Common myeloid progenitor, CD34-positive (primary cell): ENCODE measurements at regions of chr12 and their contacts with region 1.

Region 1: GRCh38 chr12:106841510-106842302 is 67.2 kb downstream of the RIC8B start:
- DNase-seq: peak; percentile 39 to 63 (median 54)
- H3K4me3 ChIP-seq: no peak overlapping the region
- H3K27ac ChIP-seq: no peak overlapping the region
- H3K4me1 ChIP-seq: peaks cover 8 to 23% (median 14%) of the 10 kb centered on the region in 4 experiments
- H3K27me3 ChIP-seq: no peaks in the 10 kb centered on the region

Region 2: DNA sequence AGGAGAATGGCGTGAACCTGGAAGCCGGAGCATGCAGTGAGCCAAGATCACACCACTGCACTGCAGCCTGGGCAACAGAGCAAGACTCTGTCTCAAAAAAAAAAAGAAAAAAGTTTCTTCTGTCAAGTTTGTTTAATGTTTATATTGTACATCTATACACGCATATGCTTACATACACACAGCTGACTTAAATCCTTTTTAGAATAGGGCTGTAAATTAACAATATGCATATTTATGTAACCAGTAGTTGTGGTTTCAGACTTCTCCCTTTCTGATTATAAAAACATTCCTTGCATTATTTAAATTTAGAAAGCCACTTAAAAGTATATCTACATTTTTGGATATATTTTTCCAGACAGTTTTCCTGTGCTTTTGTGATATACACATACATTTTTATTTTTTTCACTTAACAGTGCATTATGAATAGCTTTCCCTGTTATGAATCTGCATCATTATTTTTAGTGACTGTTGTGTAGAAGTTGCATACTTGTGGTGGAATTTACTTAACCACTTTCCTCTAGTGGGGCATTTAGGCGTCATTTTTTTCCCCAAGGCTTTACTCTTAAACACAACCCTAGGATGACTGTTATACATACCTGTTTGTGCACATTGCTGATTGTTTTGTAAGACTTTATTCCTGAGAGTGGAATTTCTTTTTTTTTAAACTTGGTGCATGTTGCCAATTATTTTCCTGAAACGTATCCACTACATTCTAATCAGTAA is 454.7 kb before region 1 on chr12:
- CTCF ChIA-PET with region 1: interaction called, 20 read pairs
- POLR2A ChIA-PET with region 1: no interaction called
- DNase-seq: no peak
- H3K4me3 ChIP-seq: no peak overlapping the region
- H3K27ac ChIP-seq: no peak overlapping the region
- H3K4me1 ChIP-seq: no peaks in the 10 kb centered on the region
- H3K27me3 ChIP-seq: peaks cover 0 to 18% (median 5%) of the 10 kb centered on the region in 5 experiments

Region 3: DNA sequence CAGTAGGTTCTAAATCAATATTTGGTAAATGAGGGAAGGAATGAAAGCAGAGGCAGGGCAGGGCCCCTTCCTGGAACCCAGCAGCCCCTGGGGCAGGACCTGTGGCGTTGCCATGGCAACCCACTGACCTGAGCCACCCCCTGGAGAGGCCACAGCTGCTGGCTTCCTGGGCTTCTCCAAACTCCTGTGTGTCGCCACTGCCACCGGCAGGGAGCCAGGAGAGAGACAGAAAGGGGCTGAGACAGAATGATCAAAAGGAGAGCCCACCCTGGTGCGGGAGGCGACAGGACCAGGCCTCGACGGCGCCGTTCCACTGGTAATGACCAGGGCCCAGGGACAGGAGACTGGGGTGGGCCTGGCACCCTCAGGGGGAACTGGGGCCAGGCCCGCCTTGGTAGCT is 240.7 kb before region 1 on chr12:
- CTCF ChIA-PET with region 1: no interaction called
- POLR2A ChIA-PET with region 1: no interaction called
- DNase-seq: no peak
- H3K4me3 ChIP-seq: no peak overlapping the region
- H3K27ac ChIP-seq: no peak overlapping the region
- H3K4me1 ChIP-seq: no peaks in the 10 kb centered on the region
- H3K27me3 ChIP-seq: peaks cover 5 to 61% (median 13%) of the 10 kb centered on the region in 5 experiments

Region 4: DNA sequence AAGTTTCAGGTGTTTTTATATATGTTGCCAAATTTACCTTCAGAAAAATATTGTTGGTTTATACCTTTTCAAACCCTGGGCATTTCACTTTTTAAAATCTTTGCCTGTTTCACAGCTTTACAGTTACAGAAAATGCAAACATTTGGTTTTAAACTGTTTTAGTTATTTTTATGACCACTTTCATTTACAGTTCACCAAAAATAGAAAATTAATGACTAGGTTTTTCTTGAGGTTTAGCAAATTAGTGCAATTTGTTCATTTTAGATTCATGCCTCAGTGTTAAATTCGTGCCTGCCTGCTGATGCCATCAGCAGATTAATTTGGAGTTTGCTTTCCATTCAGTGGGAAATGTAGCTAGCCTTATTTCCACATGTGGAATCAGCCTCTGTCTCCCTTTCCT is 21.7 kb before region 1 on chr12:
- CTCF ChIA-PET with region 1: no interaction called
- POLR2A ChIA-PET with region 1: no interaction called
- DNase-seq: no peak
- H3K4me3 ChIP-seq: no peak overlapping the region
- H3K27ac ChIP-seq: no peak overlapping the region
- H3K4me1 ChIP-seq: no peaks in the 10 kb centered on the region
- H3K27me3 ChIP-seq: no peaks in the 10 kb centered on the region

Region 5: GRCh38 chr12:106831699-106832098 is 10.0 kb before region 1 on chr12:
- CTCF ChIA-PET with region 1: interaction called, 12 read pairs
- POLR2A ChIA-PET with region 1: no interaction called
- DNase-seq: no peak
- H3K4me3 ChIP-seq: no peak overlapping the region
- H3K27ac ChIP-seq: no peak overlapping the region
- H3K4me1 ChIP-seq: no peaks in the 10 kb centered on the region
- H3K27me3 ChIP-seq: no peaks in the 10 kb centered on the region